Activated T-helper 1 cell treated with anti-CD3 and anti-CD28 coated beads, Interleukin-12 subunit alpha, Interleukin-12 subunit beta, Interleukin-2, Interleukin-4 antibody, amounts not matched to agents 30 ng/mL and 10 ng/mL and 1 ng/mL, durations not matched to agents 14 hours and 24 hours and 36 hours (primary cell): ENCODE measurements at regions of chr4 and their contacts with region 1.

Region 1: DNA sequence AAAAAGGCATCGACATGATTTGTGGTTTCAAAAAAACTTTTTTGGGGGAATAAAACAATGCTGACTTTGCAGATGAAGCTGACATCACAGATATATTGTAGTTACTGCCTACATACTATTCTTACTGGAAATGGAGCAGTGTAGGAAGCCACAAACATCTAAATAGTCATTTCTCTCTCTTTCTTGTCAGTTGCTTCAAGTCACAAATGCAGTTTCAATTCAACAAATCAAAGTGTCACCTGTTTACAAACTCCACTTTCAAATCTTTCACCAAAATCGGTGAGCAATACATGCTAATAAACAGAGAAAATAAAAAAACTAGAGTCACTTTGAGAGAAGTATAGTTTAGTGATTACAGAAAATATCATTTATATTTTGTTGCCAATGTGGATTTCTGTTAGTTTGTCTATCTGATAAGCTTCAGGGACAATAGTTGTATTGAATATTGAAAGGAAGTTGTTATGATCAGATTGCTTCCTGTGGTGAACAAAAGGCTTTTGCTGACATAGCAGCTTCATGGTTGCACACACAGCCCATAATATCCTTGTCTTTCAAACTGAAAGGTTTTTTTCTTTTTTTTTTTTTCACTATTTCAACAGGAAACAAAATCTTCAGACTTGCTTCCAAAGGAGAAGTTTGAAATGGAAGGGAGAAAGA is 49.7 kb upstream of the PTPN13 start:
- DNase-seq: peak; percentile 7
- H3K4me3 Mint-ChIP-seq: peak overlapping the region; percentile 75
- H3K27ac Mint-ChIP-seq: peak overlapping the region; percentile 96
- H3K4me1 Mint-ChIP-seq: peaks cover 39% of the 10 kb centered on the region
- H3K27me3 Mint-ChIP-seq: peaks cover 5% of the 10 kb centered on the region

Region 2: DNA sequence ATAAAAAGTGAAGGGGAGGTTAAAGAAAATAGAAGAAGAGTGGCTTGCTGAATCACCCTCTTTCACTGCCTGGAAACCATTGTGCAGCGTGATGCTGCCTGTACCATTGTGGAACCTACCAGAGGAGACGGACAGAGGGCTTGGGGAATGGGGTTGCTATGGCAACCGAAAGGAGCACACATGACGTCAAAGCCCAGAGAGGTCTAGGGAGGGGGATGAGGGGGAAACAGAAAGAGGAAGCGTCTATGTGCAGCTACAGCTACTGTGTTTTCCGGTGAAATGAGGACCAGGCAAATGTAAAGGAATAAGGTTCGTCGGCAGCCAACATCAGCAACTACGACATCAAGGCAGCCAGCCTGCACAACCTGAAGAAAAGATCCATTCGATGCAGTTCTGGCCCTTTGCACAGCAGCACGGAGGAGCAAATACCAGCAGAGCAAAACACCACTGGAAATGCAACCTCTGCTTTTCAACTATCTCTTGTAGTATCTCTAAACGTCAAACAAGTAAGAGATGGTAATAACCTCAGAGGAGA is 184.4 kb before region 1 on chr4 and contains the start of gene MAPK10:
- intact Hi-C with region 1: loop called (anchors 1 kb)
- DNase-seq: peak; percentile 59
- H3K4me3 Mint-ChIP-seq: peak within 1 kb of the TSS; percentile 59
- H3K27ac Mint-ChIP-seq: peak within 1 kb of the TSS; percentile 20
- H3K4me1 Mint-ChIP-seq: peaks cover 26% of the 10 kb centered on the region
- H3K27me3 Mint-ChIP-seq: peaks cover 8% of the 10 kb centered on the region
- total RNA-seq, gene MAPK10: not detected in 2 replicates

Region 3: DNA sequence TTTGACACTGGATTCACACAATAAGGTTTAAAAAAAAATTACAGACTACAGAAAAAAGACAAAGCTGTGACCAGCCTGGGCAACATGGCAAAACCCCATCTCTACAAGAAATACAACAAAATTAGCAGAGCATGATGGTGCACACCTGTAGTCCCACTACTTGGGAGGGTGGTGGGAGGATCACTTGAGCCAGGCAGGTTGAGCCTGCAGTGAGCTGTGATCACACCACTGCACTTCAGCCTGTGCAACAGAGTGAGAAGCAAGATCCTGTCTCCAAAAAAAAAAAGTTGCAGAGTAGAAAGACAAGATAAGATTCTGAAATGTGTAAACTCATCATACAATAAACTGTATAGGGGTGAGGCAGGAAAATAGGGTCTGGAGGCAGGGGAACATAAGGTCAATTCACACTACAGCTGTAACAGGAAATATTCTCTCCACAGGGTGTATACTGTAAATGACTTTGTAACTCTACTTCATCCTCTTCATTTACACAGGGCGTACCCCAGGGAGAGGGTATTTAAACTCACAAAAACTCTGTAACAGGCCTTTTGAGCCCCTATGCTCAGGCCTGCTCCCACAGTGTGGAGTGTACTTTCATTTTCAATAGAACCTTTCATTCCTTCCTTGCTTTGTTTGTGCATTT is 71.9 kb before region 1 on chr4:
- intact Hi-C with region 1: no loop called
- DNase-seq: no peak
- H3K4me3 Mint-ChIP-seq: no peak overlapping the region
- H3K27ac Mint-ChIP-seq: no peak overlapping the region
- H3K4me1 Mint-ChIP-seq: no peaks in the 10 kb centered on the region
- H3K27me3 Mint-ChIP-seq: peaks cover 9% of the 10 kb centered on the region

Region 4: GRCh38 chr4:86557526-86557925 is 13.1 kb after region 1 on chr4:
- intact Hi-C with region 1: loop called (anchors 2 kb)
- DNase-seq: no peak
- H3K4me3 Mint-ChIP-seq: no peak overlapping the region
- H3K27ac Mint-ChIP-seq: no peak overlapping the region
- H3K4me1 Mint-ChIP-seq: peaks cover 15% of the 10 kb centered on the region
- H3K27me3 Mint-ChIP-seq: peaks cover 12% of the 10 kb centered on the region

Region 5: GRCh38 chr4:86593688-86594558 is 49.5 kb after region 1 on chr4 and contains the start of gene PTPN13:
- intact Hi-C with region 1: loop called (anchors 1 kb)
- DNase-seq: peak; percentile 45
- H3K4me3 Mint-ChIP-seq: peak within 1 kb of the TSS; percentile 74
- H3K27ac Mint-ChIP-seq: peak within 1 kb of the TSS; percentile 69
- H3K4me1 Mint-ChIP-seq: peaks cover 8% of the 10 kb centered on the region
- H3K27me3 Mint-ChIP-seq: peaks cover 47% of the 10 kb centered on the region
- total RNA-seq, gene PTPN13: 0.44 and 0.66 TPM in 2 replicates

Region 6: GRCh38 chr4:86608757-86609375 is 64.4 kb after region 1 on chr4:
- intact Hi-C with region 1: no loop called
- DNase-seq: no peak
- H3K4me3 Mint-ChIP-seq: no peak overlapping the region
- H3K27ac Mint-ChIP-seq: no peak overlapping the region
- H3K4me1 Mint-ChIP-seq: no peaks in the 10 kb centered on the region
- H3K27me3 Mint-ChIP-seq: peaks cover 19% of the 10 kb centered on the region

Region 7: DNA sequence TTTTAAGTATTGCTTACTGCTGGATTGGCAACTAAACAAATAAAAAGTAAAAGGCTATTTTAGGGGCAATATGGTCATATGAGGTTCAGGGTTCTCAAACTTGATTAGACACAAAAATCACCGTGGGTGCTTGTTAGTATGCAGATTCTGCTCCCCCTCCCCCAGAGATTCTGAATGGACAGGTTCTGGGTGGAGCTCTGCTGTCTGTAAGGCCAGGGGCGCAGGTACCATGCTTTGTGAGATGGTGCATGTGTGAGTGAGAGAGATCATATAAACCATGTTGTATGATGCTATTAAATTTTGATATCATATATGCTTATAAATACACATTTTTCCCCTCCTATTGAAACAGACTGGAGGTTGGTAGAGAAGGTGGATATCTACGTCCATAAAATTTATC is 469.2 kb after region 1 on chr4:
- intact Hi-C with region 1: no loop called
- DNase-seq: no peak
- H3K4me3 Mint-ChIP-seq: peak overlapping the region; percentile 42
- H3K27ac Mint-ChIP-seq: peak overlapping the region; percentile 5
- H3K4me1 Mint-ChIP-seq: peaks cover 84% of the 10 kb centered on the region
- H3K27me3 Mint-ChIP-seq: no peaks in the 10 kb centered on the region

Region 8: DNA sequence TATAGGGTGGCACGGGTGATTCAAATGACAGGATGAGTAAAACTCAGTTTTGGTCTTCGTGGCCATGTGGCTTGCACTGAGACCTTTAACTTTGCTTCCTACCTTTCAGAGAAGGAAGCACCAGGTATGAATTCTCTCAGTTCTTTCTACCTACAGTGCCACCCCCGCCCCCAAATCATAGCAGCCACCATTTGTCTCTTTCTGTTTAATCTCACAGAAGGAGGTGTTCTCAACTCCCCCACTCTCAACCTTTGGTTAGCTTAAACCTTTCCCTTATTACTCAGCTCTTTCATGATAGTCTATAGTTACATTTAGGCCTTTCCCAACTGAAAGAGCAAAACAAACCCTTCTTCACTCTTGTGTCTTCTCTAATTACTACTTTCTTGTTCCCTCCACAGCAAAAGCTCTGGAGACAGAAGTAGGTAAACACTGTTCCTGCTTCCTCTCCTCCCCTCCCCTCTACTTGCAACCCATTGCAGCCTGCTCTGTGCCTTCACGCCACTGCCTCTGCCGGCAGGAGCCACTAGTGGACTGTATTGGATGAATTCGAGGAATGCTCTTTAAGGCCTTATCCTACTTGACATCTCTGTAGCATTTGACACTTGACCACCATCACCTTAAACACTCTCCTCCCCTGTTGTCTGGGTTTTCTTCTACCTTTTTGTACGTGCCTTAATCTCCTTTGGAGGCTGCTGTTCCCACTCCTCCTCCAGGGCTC is 514.1 kb after region 1 on chr4:
- intact Hi-C with region 1: loop called (anchors 10 kb)
- DNase-seq: no peak
- H3K4me3 Mint-ChIP-seq: peak overlapping the region; percentile 3
- H3K27ac Mint-ChIP-seq: peak overlapping the region; percentile 82
- H3K4me1 Mint-ChIP-seq: peaks cover 65% of the 10 kb centered on the region
- H3K27me3 Mint-ChIP-seq: no peaks in the 10 kb centered on the region

Region 9: DNA sequence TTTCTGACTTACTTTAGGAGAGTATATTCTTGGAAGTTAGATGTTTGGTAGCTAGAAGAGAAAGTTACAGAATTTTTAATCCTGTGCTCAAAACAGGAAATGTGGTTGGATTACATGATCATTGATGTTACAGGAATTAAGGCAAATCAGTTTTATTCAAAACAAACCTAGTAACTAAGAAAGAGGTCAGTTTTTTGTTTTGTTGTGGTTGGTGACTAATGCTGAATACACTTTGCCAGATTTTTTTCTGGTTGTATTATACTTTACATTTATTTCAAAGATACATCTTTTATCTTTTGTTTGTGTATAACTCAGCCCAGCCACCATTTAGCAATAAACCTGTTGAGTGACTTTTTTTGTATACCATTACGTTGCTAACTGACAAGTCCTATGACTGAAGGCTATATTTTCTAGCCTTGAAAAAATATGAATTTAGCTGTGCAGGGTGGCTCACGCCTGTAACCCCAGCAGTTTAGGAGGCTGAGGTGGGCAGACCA is 559.3 kb after region 1 on chr4:
- intact Hi-C with region 1: loop called (anchors 5 kb)
- DNase-seq: no peak
- H3K4me3 Mint-ChIP-seq: peak overlapping the region; percentile 19
- H3K27ac Mint-ChIP-seq: peak overlapping the region; percentile 29
- H3K4me1 Mint-ChIP-seq: peaks cover 19% of the 10 kb centered on the region
- H3K27me3 Mint-ChIP-seq: no peaks in the 10 kb centered on the region